ENCODE measurements at regions of chr11 and their contacts with region 1.

Region 1: DNA sequence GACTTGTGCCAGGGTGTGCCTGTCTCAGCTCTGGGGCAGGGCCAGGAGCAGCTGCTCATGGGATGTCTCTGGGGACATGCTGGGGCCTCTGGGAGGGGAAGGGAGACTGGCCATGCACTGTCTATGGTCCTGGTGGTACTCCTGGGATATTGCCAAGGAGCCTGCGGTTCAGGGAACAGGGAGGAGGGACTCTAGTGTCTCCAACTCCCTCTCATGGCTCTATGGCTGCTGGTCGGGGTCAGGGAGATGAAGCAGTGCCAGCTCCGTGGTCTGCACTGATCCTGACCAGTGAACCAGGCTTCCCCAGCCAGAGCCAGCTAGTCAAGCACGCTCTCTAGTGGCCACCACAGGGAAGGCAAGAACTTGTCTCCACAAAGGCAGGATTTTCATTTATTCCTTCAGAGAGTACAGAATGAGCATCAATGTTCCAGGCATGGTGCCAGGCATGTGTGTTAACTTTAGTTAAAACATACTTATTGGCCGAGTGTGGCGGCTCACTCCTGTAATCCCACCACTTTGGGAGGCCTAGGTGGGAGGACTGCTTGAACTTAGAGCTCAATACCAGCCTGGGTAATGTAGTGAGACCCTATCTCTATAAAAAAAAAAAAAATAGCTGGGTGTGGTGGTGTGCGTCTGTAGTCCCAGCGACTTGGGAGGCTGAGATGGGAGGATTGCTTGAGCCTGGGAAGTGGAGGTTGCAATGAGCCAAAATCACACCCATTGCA is 2.5 kb upstream of the BEST1 start:
- DNase-seq: peak; percentile 97
- H3K4me3 ChIP-seq: no peak overlapping the region
- H3K27ac ChIP-seq: no peak overlapping the region
- H3K4me1 ChIP-seq: peaks cover 21% of the 10 kb centered on the region
- H3K27me3 ChIP-seq: no peaks in the 10 kb centered on the region

Region 2: GRCh38 chr11:61792310-61793085 is 155.2 kb before region 1 on chr11 and contains the starts of genes FEN1 and TMEM258:
- in situ Hi-C with region 1: no loop called
- DNase-seq: peak; percentile 97
- H3K4me3 ChIP-seq: peak within 1 kb of the TSS; percentile 95
- H3K27ac ChIP-seq: peak within 1 kb of the TSS; percentile 98
- H3K4me1 ChIP-seq: peaks cover 19% of the 10 kb centered on the region; the same call in 1 of the 2 replicates
- H3K27me3 ChIP-seq: no peaks in the 10 kb centered on the region
- total RNA-seq, gene FEN1: 29.0 and 29.2 TPM in 2 replicates
- total RNA-seq, gene TMEM258: 28.5 and 72.8 TPM in 2 replicates

Region 3: DNA sequence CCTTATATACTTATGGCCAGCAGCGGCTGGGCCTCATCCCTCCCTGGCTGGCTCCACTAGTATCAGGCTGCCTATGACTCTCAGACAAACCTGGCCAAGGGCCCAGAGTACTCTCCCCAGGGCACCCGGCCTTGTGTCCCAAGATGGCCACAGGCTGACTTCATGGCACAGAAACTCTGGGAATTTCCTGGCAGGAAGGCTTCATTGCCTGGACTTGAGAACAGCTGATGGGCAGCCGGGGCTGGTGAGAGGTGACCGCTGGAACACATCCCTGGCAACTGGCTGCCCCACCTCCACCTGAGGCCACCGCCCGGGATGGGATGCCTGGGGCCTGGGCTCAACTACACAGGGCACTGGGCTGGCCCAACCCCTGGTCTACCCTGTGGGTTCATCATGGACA is 59.6 kb before region 1 on chr11:
- in situ Hi-C with region 1: loop called (anchors 10 kb)
- DNase-seq: peak; percentile 95
- H3K4me3 ChIP-seq: no peak overlapping the region
- H3K27ac ChIP-seq: peak overlapping the region; percentile 71
- H3K4me1 ChIP-seq: peaks cover 18% of the 10 kb centered on the region
- H3K27me3 ChIP-seq: no peaks in the 10 kb centered on the region

Region 4: DNA sequence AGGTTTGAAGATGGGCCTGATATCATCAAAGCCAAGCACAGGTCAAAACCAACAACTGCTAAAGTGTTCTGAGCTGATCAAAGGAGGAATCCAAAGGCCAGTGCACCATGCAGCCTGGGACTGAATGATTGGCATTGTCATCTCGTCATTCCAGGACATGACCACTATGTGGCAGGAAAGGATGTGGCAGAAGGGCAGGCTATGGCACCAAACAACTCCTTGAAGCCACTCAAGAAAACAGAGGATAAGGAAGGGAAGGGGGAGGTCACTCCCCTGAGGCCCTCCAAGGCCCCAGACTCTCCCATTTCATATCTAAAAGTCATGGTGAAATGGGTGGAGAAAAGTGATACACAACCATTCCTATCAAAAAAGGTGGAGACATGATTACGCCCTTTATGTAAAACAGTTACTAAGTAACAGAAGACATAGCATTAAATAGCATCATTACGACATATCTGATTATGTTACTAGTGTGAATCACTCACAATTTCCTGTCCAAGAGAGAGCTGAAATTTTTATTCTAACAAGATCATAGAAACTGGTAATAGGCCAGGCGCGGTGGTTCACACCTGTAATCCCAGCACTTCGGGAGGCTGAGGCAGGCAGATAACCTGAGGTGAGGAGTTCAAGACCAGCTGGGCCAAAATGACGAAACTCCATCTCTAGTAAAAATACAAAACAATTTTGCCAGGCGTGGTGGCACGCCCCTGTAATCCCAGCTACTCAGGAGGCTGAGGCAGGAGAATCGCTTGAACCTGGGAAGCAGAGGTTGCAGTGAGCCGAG is 549.7 kb after region 1 on chr11:
- in situ Hi-C with region 1: no loop called
- DNase-seq: peak; percentile 87
- H3K4me3 ChIP-seq: no peak overlapping the region
- H3K27ac ChIP-seq: peak overlapping the region; percentile 69
- H3K4me1 ChIP-seq: peaks cover 18% of the 10 kb centered on the region
- H3K27me3 ChIP-seq: no peaks in the 10 kb centered on the region